Lower leg skin (tissue), 4 donors: ENCODE measurements at regions of chr12 and their contacts with region 1.

Region 1: DNA sequence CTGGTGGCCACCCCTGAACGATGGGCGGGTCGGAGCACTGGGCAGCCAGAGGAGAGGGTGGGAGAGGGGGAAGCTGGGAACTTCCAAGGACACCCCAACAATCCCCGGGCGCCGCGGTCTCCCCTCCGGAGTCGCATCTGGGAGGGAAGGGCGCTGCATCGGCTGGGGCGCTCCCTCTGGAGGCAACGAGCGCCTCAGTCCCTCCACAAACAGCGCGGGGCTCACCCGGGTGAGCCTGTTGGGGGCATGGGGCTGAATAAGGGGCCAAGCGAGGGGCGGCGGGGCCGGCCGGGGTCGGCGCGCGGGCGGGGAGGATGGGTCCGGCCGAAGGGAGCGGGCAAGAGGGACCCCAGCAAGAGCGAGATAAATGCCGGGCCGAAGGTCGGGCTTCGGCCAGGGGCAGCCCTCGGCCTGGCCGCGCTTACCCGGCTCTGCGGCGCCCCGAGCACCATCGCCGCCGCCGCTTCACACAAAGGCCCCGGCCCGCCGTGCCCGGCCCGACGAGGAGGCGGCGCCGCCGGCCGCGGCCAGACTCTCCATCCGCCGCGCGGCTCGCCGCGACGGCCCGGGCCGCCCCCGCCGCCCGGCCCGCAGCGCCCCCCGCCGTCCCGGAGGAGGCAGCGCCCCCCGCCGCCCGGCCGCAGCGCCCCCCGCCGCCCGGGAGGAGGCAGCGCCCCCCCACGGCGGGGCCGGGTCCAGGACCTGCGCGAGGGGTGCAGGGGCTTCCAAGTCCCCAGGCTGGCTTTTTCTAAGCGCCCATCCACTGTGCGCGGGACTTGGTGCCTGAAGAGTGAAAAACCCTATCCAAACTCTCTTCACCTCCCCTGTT is at the start of gene ZBTB39:
- DNase-seq: no peak
- H3K4me3 ChIP-seq: peak within 1 kb of the TSS; percentile 86
- CTCF ChIP-seq: no peak
- POLR2A ChIP-seq: no peak
- total RNA-seq, gene ZBTB39: 5.2 to 6.1 (median 6.1) TPM

Region 2: GRCh38 chr12:56759263-56759908 is 246.8 kb before region 1 on chr12:
- intact Hi-C with region 1: loop called (anchors 5 kb)
- DNase-seq: no peak
- H3K4me3 ChIP-seq: no peak overlapping the region
- CTCF ChIP-seq: no peak
- POLR2A ChIP-seq: no peak

Region 3: GRCh38 chr12:56839915-56840325 is 166.3 kb before region 1 on chr12:
- intact Hi-C with region 1: no loop called
- DNase-seq: peak in 1 of 2 donors; percentile 16
- H3K4me3 ChIP-seq: no peak overlapping the region
- CTCF ChIP-seq: no peak
- POLR2A ChIP-seq: no peak

Region 4: GRCh38 chr12:57016318-57016717 is 10.1 kb after region 1 on chr12 and contains the start of gene TAC3:
- intact Hi-C with region 1: no loop called
- DNase-seq: no peak
- H3K4me3 ChIP-seq: no peak within 1 kb of the TSS
- CTCF ChIP-seq: no peak
- POLR2A ChIP-seq: no peak
- total RNA-seq, gene TAC3: 0.46 TPM in 1 of 4 donors, not detected in the others

Region 5: DNA sequence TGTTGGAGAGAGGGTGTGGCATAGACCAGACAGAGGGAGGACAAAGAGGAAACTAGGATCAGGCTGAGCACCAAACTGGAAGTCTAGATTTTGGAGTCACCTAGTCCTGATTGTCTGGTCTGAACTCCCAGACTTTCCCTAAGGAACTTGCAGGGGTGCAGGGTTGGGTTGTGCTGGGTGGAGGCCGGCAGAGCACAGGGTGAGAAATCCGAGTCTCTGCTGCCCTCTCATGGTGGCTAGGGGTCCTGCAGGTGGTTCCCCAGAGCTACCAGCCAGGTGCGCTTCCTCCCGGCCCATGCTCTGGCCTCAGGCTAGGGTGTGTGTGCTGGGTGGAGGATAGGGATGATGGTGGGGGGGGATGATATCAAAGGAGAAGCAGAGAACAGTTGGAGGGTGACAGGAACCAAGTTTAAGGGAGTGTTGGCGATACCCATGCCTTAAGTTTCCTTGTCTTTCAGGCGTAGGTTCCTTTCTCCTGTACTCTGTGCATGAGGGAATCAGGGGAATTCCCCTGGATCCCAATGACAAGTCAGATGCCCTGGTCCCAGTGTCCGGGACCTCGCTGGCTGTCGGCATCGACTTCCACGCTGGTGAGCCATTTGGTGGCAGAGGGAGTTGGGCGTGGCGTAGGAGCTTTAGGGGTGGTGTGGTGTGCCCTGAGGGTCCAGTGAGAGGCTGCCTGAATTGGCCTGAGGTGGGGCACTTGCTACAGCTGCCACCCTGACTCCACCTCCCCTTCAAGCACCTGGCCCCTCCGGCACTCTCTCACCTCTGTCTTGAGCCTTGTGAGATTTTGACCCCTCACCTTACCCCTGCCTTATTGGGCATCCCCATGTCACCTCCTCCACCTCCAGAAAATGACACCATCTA is 177.0 kb after region 1 on chr12:
- intact Hi-C with region 1: loop called (anchors 10 kb)
- DNase-seq: peak; percentile 74 to 96
- H3K4me3 ChIP-seq: no peak overlapping the region
- CTCF ChIP-seq: peak in 1 of 3 donors; percentile 94
- POLR2A ChIP-seq: no peak